MCF 10A (cell line): ENCODE measurements at regions of chr9 and their contacts with region 1.

Region 1: GRCh38 chr9:89602978-89603766 is 1.6 kb upstream of the GADD45G start:
- DNase-seq: peak; percentile 86
- H3K4me3 Mint-ChIP-seq: peak overlapping the region; percentile 79
- H3K27ac Mint-ChIP-seq: no peak overlapping the region
- H3K4me1 Mint-ChIP-seq: peaks cover 10% of the 10 kb centered on the region
- H3K27me3 Mint-ChIP-seq: peaks cover 26% of the 10 kb centered on the region
- CTCF ChIP-seq: peak; percentile 94

Region 2: DNA sequence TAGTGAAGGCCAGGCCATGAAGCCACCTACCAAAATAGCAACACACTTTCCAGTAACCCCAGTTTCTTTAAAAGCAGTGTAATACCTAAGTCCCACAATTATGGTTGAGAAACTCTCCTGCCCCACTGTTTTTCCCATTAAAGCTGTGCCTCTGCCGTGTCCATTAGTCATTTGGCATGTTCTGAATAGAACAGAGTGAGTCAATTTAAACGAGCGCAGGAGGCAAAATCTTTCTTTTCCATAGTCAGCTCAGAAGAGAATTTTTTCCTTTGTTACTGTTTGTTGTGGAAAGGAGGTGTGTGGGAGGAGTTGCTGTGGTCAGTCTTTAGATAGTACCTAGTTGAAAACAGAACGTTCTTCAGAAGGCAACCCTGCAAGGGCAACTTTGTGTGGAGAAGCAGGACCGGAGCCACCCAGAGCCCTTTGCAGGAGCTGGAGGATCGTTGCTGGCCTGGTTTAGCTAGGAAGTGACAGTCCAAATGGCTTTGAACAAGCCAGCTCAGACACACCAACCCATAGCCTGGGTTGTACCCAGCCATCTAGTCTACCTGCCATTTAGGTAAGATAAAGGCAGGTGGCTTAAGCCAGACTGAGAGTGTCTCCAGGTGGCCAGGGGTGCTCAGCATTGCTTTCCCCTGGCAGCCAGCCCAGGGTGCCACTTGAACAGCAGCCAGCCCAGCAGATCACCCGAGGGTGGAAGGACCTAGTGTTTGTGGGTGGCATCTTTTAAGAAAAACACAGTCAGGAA is 32.0 kb after region 1 on chr9:
- CTCF ChIA-PET with region 1: interaction called, 7 read pairs
- POLR2A ChIA-PET with region 1: interaction called, 8 read pairs
- intact Hi-C with region 1: loop called (anchors 1 kb)
- DNase-seq: peak; percentile 83
- H3K4me3 Mint-ChIP-seq: peak overlapping the region; percentile 6
- H3K27ac Mint-ChIP-seq: no peak overlapping the region
- H3K4me1 Mint-ChIP-seq: peaks cover 24% of the 10 kb centered on the region
- H3K27me3 Mint-ChIP-seq: no peaks in the 10 kb centered on the region
- CTCF ChIP-seq: no peak

Region 3: DNA sequence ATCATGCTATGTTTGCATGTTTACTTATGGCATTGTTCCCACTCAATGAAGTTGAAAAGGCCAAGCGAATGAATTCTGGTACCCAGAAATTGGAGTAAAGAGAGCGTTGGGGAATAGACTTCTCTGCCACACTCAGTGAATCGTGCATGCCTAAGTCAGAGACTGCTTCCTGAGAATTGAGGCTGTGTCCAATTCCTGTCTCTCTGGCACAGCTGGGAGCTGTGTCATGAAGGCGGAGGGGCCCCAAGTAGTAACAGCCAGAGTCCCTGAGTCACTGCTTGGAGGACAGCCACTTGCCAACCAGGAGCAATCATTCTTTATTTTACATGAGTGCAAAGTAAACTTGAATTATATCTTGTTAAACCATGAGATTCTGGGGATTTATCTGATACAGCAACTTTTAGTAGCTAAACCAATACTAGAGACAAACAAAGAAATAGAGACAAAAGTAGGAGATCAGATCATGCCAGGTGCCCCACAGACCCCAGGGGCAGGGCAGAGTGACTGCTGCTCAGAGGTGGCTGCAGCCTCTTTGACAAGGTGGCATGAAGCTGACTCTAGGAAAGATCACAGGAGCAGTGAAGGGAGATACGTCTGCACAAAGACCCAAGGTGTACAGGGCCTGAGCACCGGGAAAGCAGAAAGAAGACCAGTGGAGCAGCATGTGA is 247.6 kb after region 1 on chr9:
- CTCF ChIA-PET with region 1: no interaction called
- POLR2A ChIA-PET with region 1: no interaction called
- intact Hi-C with region 1: loop called (anchors 10 kb)
- DNase-seq: peak; percentile 23
- H3K4me3 Mint-ChIP-seq: no peak overlapping the region
- H3K27ac Mint-ChIP-seq: no peak overlapping the region
- H3K4me1 Mint-ChIP-seq: peaks cover 12% of the 10 kb centered on the region
- H3K27me3 Mint-ChIP-seq: peaks cover 25% of the 10 kb centered on the region
- CTCF ChIP-seq: no peak

Region 4: DNA sequence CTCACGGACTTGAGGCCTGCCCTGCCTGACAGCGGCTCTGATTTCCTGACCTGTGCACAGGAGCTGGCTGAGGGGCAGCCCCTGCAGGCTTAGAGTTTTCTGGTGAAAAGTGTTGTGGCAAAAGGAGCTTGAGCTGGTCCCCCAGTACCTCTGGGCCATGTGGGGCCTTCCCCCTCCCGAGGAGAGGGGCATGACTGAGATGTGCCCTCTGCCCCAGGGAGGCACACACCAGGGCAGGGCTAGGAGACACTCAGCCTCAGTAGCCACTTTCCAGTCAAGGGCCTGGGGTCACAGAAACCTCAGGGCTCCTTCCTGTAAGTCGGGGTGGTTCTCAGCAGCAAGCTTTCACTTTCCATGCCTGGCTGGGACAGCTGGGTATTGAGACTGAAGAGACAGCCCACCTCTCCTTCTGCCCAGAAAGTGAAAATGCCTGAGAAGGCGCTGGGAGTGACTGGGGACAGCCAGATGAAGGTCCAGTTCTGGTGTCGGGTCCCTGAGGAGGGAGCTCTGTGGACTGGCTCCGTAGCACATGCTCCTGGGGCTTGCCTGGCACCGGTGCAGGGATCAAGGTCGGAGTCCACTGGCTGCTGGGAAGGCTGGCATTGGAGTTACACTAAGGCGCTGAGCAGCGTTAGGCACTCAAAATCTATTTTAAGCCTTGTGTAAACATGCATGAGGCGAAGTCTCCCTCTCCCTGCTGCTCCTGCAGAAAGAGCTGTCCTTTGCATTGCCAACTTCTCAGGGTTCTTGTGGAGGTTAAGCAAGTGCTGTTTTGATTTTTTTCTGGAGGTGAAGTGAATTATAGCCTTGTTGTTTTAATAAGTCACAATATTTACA is 396.6 kb after region 1 on chr9:
- CTCF ChIA-PET with region 1: interaction called, 26 read pairs
- POLR2A ChIA-PET with region 1: interaction called, 5 read pairs
- intact Hi-C with region 1: loop called (anchors 1 kb)
- DNase-seq: peak; percentile 55
- H3K4me3 Mint-ChIP-seq: no peak overlapping the region
- H3K27ac Mint-ChIP-seq: peak overlapping the region; percentile 5
- H3K4me1 Mint-ChIP-seq: peaks cover 6% of the 10 kb centered on the region
- H3K27me3 Mint-ChIP-seq: no peaks in the 10 kb centered on the region
- CTCF ChIP-seq: no peak

Region 5: DNA sequence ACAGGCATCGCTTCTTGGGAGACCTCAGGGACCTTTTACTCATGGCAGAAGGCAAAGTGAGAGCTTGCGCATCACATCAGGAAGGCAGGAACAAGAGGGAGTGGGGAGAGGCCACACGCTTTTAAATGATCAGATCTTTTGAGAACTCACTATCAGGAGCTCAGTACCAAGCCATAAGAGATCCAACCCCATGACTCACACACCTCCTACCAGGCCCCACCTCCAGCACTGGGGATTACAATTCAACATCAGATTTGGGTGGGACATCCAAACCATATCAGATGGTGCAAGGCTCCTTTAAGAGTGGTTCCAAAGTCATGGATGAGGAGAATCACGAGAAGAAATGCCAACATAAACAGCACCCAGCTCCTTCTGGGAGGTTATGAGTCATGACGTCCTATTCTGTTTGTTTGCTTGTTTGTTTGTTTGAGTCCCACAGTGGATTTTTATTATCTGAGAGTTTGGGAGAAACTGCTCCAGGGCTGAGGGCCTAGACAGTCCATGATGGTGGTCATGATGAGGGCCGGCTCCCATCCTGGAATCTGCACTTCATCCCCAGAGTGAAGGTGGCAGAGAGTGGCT is 455.1 kb after region 1 on chr9:
- CTCF ChIA-PET with region 1: interaction called, 11 read pairs
- POLR2A ChIA-PET with region 1: no interaction called
- intact Hi-C with region 1: no loop called
- DNase-seq: peak; percentile 36
- H3K4me3 Mint-ChIP-seq: no peak overlapping the region
- H3K27ac Mint-ChIP-seq: no peak overlapping the region
- H3K4me1 Mint-ChIP-seq: peaks cover 5% of the 10 kb centered on the region
- H3K27me3 Mint-ChIP-seq: no peaks in the 10 kb centered on the region
- CTCF ChIP-seq: no peak

Region 6: DNA sequence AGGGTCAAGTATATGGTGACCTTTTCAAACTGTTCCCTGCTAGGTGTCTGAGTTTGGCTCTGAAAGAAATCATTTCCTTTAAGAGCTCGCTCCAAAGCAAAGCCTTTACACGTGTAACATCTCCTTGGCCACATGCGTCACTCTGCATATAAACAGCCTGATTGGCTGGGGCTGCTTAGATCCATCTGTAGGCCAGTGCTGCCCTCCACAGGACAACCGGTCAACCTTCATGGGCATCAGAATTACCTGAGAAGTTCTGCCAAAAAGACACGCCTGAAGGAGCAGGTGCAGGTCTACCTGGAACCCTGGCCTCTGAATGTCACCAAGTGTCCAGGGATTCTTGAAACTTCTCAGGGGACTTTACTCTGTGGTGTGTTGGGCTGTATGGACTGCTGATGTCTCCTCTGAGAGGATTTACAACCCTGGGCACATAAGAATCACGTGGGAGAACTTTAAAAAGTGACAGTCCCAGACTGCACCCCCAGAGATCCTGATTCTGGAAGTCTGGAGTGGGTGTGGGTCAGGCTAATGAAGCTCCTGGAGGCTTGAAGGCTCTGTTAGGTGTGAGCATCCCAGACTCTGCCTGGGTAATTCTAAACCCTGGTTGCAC is 499.2 kb after region 1 on chr9:
- CTCF ChIA-PET with region 1: interaction called, 382 read pairs
- POLR2A ChIA-PET with region 1: interaction called, 8 read pairs
- intact Hi-C with region 1: loop called (anchors 1 kb)
- DNase-seq: peak; percentile 91
- H3K4me3 Mint-ChIP-seq: no peak overlapping the region
- H3K27ac Mint-ChIP-seq: no peak overlapping the region
- H3K4me1 Mint-ChIP-seq: peaks cover 5% of the 10 kb centered on the region
- H3K27me3 Mint-ChIP-seq: no peaks in the 10 kb centered on the region
- CTCF ChIP-seq: peak; percentile 84